ENCODE measurements at regions of chrX and their contacts with region 1.

Region 1: GRCh38 chrX:4547213-4547836 is 833.9 kb upstream of the PRKX start:
- DNase-seq: peak; percentile 31
- ATAC-seq: no peak

Region 2: DNA sequence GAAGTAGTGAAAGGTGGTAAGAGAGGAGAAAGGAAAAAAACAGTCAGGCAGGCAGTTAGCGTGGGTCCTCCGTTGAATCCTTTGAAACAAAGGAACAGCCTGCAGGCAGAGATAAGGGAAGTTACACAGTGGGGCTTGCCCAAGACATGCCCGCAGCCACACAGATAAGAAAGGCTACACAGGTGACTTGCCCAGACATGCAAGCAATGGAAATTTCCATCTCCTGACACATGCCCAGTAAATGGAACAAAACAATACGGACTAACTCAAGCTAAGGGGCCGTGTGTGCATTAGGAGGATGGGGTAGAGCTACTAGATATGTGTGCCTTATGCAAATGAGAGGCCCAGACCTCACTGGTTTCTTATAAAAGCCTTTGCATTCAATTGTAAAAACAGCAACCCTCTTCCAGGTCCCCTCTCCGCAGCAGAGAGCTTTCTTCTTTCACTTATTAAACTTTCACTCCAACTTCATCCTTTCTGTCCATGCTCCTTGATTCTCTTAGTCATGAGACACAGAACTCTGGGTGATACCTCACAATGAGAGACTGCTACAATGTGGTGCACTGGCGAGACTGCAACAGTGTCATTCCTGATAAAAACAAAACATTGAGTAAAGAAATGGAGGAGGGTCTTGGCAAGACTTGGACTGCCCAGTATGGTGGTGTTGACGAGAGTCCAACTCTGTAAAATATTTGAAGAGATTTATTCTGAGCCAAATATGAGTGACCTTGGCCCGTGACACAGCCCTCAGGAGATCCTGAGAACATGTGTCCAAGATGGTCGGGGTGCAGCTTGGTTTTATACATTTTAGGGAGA is 163.5 kb after region 1 on chrX:
- intact Hi-C with region 1: no loop called
- DNase-seq: no peak
- ATAC-seq: no peak

Region 3: GRCh38 chrX:5113128-5113527 is 565.8 kb after region 1 on chrX:
- intact Hi-C with region 1: loop called (anchors 10 kb)
- DNase-seq: no peak
- ATAC-seq: no peak